ENCODE measurements at regions of chr4 and their contacts with region 1.

Region 1: GRCh38 chr4:71229477-71230270 is 109.1 kb upstream of the SLC4A4 start:
- DNase-seq: peak in 7 of 10 donors; percentile 29 to 57 (median 53)
- H3K4me3 ChIP-seq: peak overlapping the region in 30 of 59 donors; percentile 0 to 58 (median 24)
- H3K27ac ChIP-seq: peak overlapping the region in 10 of 59 donors; percentile 13 to 57 (median 44)
- H3K27me3 ChIP-seq: peaks cover 0 to 4% (median 0%) of the 10 kb centered on the region in 45 donors
- CTCF ChIP-seq: peak; percentile 55 to 87 (median 78)

Region 2: GRCh38 chr4:71186566-71187403 is 42.9 kb before region 1 on chr4:
- intact Hi-C with region 1: loop called in 1 of 2 experiments (anchors 5 kb)
- DNase-seq: peak in 6 of 10 donors; percentile 15 to 64 (median 43)
- H3K4me3 ChIP-seq: peak overlapping the region; percentile 43 to 89 (median 73)
- H3K27ac ChIP-seq: peak overlapping the region in 51 of 59 donors; percentile 7 to 84 (median 64)
- H3K27me3 ChIP-seq: peaks cover 0 to 8% (median 0%) of the 10 kb centered on the region in 45 donors
- CTCF ChIP-seq: peak in 1 of 56 donors; percentile 11

Region 3: GRCh38 chr4:71540749-71541269 is 311.1 kb after region 1 on chr4:
- intact Hi-C with region 1: loop called in 1 of 2 experiments (anchors 10 kb)
- DNase-seq: no peak
- H3K4me3 ChIP-seq: no peak overlapping the region
- H3K27ac ChIP-seq: no peak overlapping the region
- H3K27me3 ChIP-seq: no peaks in the 10 kb centered on the region
- CTCF ChIP-seq: no peak

Region 4: DNA sequence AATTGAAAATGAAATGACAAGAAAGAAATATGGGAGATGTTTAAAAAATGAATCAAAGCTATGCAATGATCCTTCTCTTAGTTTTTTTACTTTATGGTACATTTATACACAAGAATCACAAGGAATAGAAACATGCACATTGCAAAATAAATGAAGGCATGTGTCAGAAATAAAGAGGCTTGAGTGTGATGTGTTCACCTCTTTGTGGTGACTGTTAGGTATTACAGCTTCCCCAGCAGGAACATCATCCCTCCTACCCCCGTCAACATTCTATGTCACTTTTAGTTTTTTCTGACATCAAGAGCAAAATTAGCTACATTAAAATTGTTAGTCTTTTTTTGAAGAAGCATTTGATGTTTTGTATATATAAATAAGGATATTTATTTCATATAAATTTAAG is 323.9 kb after region 1 on chr4:
- intact Hi-C with region 1: loop called (anchors 10 kb)
- DNase-seq: no peak
- H3K4me3 ChIP-seq: no peak overlapping the region
- H3K27ac ChIP-seq: peak overlapping the region in 5 of 59 donors; percentile 0 to 64 (median 22)
- H3K27me3 ChIP-seq: no peaks in the 10 kb centered on the region
- CTCF ChIP-seq: peak in 54 of 56 donors; percentile 28 to 74 (median 58)

Region 5: DNA sequence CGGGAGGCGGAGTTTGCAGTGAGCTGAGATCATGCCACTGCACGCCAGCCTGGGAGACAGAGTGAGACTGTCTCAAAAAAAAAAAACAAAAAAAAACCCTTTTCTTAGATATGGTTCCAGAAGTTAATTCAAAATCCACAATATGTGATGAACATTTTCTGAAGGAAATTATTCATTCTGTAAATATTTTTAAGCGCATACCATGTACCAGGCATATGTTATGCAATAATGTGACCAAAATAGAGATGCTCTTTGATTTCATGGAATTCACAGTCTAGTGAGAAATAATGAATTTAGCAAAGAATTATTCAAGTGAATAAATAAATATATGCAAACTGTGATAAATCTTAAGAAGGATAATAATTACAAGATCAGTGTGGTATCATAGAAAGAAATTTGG is 379.5 kb after region 1 on chr4:
- intact Hi-C with region 1: no loop called
- DNase-seq: no peak
- H3K4me3 ChIP-seq: no peak overlapping the region
- H3K27ac ChIP-seq: no peak overlapping the region
- H3K27me3 ChIP-seq: peaks cover 0 to 5% (median 0%) of the 10 kb centered on the region in 45 donors
- CTCF ChIP-seq: no peak

Measured in dorsolateral prefrontal cortex (tissue), 120 donors.